HEK293 (cell line): ENCODE measurements at regions of chr19 and their contacts with region 1.

Region 1: DNA sequence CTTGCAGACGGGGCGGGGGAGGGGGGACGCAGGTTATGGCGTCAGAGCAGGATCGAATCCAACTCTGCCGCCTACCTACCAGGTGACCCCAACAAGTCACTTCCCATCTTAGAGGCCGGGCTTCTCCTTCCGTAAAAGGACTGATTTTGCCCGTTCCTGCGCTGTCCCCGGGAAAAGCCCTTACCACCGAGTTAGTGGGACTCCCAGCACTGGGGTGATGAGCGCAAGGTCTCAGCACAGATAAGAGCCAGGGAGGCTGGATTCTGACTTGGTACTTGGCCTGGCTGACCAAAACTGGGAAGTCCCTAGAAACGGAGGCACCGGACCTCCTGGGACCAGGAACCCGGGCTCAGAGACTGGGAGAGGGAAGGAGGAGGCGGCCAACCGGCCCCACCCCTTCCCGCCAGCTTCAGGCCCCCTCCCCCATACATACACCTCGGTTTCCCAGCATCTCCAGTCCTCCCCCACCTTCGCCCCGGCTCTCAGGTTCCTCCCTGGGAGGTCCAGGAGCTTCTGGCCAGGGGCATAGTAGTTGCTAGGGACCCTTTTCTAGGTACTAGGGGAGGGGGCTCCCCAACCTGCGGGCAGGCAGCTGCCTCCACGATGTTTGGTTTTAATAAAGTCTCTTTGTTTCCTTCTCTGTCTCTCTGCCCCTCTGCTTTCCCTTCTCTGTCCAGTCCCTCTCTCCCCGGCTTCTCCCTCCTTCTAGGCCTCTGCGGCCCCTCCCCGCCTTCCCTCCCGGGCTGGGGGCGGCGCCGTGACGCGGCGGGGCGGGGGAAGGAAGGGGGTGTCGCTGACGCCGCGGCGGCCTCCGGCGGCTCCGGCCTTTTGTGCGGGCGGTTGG is at the start of gene GRAMD1A:
- H3K4me3 ChIP-seq: peak within 1 kb of the TSS; percentile 63
- H3K27ac ChIP-seq: peak within 1 kb of the TSS; percentile 98
- H3K4me1 ChIP-seq: peaks cover 35% of the 10 kb centered on the region
- CTCF ChIP-seq: no peak

Region 2: GRCh38 chr19:34910770-34911169 is 89.0 kb before region 1 on chr19:
- CTCF ChIA-PET with region 1: no interaction called
- POLR2A ChIA-PET with region 1: no interaction called
- H3K4me3 ChIP-seq: no peak overlapping the region
- H3K27ac ChIP-seq: no peak overlapping the region
- H3K4me1 ChIP-seq: no peaks in the 10 kb centered on the region
- CTCF ChIP-seq: no peak

Region 3: DNA sequence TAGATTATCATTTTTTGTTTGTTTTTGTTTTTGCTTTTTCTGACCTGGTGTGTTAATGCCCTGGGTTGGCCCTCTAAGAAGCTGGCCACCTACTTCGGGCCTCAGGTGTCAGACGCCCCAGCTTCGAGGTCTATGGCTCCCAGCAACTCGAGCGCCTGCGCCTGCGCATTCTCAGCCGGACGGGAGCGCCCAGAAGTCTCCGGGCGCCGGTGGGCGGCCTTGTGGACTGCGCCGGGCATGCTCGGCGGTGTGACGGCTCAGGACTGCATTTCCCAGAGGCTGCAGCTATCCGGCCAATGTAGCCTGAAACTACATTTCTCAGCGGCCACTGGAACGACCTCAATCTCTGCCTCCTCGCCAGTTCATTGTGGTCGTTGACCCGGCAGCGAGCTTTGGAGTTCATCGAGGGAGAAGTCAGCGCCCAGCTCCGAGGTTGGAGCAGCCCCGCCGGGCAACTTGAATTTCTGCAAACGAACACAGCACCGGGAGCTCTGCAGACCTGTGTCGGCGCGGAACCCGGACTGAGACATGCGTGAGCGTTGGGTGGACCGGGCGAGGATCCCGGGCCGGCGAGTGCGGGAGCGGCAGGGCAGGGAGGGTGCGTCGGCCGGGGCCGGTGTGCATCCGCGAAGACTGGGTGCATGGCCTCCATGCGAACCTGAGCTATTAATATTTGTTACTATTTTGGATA is 72.9 kb before region 1 on chr19 and contains the start of gene ZNF30:
- CTCF ChIA-PET with region 1: no interaction called
- POLR2A ChIA-PET with region 1: interaction called, 15 read pairs
- H3K4me3 ChIP-seq: peak within 1 kb of the TSS; percentile 51
- H3K27ac ChIP-seq: peak within 1 kb of the TSS; percentile 95
- H3K4me1 ChIP-seq: peaks cover 10% of the 10 kb centered on the region
- CTCF ChIP-seq: 0 out of 2 replicates have a peak, but pooled peaks have one; percentile 45

Region 4: DNA sequence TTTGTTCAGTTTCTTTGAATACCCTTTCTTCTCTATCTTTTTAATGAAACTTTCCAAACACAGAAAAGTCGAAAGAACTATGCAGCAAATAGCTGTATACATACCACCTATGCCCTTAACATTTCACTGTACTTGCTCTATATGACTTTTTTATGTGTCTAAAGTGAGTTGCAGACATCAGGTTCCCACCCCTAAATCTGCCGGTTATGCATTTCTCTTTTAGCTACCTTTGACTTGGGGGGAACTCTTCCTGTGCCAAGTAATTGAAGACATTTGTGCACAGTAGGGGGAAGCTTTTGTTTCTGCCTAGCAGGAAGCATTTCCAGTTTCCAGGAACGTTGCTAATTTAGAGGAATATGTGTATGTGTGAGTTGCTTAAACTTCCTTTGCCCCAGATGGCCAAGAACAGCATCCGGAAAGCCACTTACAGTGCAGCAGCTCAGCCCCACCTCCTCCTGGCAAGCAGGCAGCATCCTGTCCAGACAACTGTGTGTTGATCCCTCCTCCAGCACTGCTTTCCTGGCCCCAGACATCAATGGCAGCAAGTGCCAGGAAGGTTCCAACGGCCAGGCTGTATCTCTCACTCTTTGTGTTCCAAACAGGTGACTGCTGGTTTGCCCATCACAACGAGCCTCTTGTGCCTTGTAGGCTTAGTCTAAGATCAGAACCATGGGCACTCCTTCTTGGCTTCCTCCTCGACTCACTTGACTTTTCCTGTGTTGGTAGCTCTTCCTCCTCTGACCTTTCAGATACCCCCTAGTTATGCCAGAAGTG is 14.3 kb before region 1 on chr19:
- CTCF ChIA-PET with region 1: interaction called, 5 read pairs
- POLR2A ChIA-PET with region 1: interaction called, 17 read pairs
- H3K4me3 ChIP-seq: no peak overlapping the region
- H3K27ac ChIP-seq: no peak overlapping the region
- H3K4me1 ChIP-seq: no peaks in the 10 kb centered on the region
- CTCF ChIP-seq: no peak

Region 5: DNA sequence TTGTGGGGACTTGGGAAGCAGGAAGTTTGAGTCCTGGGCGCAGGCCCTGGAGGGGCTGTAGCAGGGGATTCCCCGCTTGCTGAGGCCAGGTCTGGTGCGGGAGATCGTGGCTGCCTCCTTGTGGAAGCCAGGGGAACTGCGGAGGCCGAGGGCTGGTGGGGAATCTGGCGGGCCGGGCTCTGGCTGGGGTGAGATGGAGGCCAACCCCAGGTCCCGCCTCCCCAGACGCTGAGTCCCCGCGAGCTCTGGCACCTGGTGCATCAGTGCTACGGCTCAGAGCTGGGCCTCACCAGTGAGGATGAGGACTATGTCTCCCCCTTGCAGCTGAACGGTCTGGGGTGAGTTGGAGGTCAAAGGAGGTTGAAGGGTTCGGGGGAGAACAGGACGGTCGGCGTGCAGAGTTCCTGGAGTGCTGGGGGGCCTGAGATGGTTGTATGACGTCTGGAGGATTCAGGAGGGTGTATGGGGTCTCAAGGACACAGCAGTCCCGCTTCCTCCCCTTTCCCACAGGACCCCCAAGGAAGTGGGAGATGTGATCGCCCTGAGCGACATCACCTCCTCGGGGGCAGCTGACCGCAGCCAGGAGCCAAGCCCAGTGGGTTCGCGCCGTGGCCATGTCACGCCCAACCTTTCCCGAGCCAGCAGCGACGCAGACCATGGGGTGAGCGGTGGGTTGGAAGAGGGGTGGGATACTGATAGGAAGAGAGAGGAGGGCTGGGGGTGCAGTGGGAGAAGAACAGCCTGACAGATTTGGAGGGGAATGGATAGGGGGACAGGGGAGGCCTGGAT is 13.5 kb after region 1 on chr19:
- CTCF ChIA-PET with region 1: interaction called, 35 read pairs
- POLR2A ChIA-PET with region 1: interaction called, 20 read pairs
- H3K4me3 ChIP-seq: no peak overlapping the region
- H3K27ac ChIP-seq: no peak overlapping the region
- H3K4me1 ChIP-seq: no peaks in the 10 kb centered on the region
- CTCF ChIP-seq: peak; percentile 93

Region 6: GRCh38 chr19:35030257-35031071 is 30.7 kb after region 1 on chr19 and contains the start of gene SCN1B:
- CTCF ChIA-PET with region 1: interaction called, 5 read pairs
- POLR2A ChIA-PET with region 1: interaction called, 10 read pairs
- H3K4me3 ChIP-seq: peak within 1 kb of the TSS; percentile 42
- H3K27ac ChIP-seq: peak within 1 kb of the TSS; percentile 74; the same call in 1 of the 2 replicates
- H3K4me1 ChIP-seq: peaks cover 14% of the 10 kb centered on the region
- CTCF ChIP-seq: no peak

Region 7: GRCh38 chr19:35107546-35107945 is 107.8 kb after region 1 on chr19:
- CTCF ChIA-PET with region 1: no interaction called
- POLR2A ChIA-PET with region 1: no interaction called
- H3K4me3 ChIP-seq: no peak overlapping the region
- H3K27ac ChIP-seq: no peak overlapping the region
- H3K4me1 ChIP-seq: no peaks in the 10 kb centered on the region
- CTCF ChIP-seq: no peak